ENCODE measurements at regions of chr19 and their contacts with region 1.

Region 1: DNA sequence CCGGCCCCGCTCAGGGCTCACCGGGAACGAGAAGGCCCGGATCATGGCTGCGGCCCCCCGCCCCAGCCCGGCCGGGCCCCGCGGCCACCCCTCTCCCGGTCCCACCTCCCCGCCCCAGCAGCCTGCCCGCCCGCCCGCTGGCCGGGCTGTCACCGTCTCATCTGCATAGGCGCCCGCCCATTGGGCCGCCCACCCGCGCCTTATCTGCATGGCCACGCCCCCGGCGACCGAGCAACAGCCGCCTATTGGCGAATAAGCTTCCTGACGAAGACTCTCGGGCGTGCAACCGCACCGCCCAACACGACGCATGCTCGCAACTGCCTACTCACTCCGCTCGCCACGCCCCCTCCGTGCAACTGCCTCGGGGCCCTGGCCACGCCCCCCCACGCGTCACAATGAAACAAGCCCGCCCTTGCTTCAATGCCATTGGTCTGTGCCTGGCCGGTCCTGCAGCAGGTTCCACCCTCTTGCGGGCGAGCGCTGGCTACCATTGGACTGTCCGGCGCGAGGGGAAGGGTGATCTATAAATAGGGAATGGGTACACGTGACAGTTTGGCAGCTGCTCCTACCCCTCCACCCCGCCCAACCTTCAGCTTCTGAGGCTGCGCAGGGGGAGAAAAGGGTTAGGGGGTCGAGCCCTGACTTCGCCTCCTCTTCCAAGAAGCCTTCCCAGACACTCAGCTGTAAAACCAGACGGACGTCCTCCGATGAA is at the start of gene DACT3:
- DNase-seq: peak; percentile 100
- H3K4me3 Mint-ChIP-seq: peak within 1 kb of the TSS; percentile 63
- H3K27ac Mint-ChIP-seq: peak within 1 kb of the TSS; percentile 39
- H3K4me1 Mint-ChIP-seq: peaks cover 7% of the 10 kb centered on the region
- H3K27me3 Mint-ChIP-seq: peaks cover 41% of the 10 kb centered on the region
- CTCF ChIP-seq: no peak
- total RNA-seq, gene DACT3: 0.09 TPM in 1 of 2 replicates, not detected in the other

Region 2: DNA sequence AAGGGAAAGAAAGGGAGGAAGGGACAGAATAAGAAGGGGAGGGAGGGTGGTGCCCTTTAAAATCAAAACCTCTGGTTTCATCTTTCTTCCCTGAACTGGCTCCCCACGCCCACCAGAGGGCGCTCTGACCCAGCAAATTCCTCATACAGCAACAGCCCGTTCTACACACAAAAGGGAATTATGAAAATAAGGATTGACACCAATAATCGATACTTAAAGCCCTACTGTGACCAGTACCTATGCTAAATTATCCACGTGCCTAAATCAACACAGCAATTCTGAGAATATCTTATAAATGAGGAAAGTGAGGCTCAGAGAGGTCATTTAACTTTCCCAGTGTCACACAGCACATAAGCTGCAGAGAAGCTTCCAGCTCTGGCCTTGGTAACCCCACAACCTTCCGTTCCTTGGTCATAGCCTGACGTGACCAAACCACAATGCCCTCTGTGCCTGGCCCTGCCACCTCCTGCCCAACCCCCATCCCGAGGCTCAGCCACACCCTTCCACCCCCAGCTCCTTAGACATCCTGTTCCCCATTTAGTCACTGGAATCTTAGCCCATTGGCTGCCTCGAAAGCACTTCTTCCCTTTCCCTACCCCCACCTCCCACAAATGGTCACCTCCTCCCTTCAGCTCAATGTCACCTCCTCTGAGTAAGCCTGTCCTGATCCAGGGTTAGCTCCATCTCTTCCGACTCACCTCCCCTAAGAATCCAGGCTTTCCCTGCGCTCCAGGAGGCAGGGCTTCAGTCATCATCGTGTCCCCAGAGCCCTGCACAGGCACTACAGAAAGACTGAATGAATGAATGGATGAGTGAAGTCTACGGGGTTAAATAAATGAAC is 131.3 kb before region 1 on chr19:
- CTCF ChIA-PET with region 1: interaction called, 25 read pairs
- POLR2A ChIA-PET with region 1: interaction called, 4 read pairs
- intact Hi-C with region 1: loop called (anchors 1 kb)
- DNase-seq: peak; percentile 75
- H3K4me3 Mint-ChIP-seq: peak overlapping the region; percentile 39
- H3K27ac Mint-ChIP-seq: no peak overlapping the region
- H3K4me1 Mint-ChIP-seq: peaks cover 15% of the 10 kb centered on the region
- H3K27me3 Mint-ChIP-seq: no peaks in the 10 kb centered on the region
- CTCF ChIP-seq: peak; percentile 94

Region 3: DNA sequence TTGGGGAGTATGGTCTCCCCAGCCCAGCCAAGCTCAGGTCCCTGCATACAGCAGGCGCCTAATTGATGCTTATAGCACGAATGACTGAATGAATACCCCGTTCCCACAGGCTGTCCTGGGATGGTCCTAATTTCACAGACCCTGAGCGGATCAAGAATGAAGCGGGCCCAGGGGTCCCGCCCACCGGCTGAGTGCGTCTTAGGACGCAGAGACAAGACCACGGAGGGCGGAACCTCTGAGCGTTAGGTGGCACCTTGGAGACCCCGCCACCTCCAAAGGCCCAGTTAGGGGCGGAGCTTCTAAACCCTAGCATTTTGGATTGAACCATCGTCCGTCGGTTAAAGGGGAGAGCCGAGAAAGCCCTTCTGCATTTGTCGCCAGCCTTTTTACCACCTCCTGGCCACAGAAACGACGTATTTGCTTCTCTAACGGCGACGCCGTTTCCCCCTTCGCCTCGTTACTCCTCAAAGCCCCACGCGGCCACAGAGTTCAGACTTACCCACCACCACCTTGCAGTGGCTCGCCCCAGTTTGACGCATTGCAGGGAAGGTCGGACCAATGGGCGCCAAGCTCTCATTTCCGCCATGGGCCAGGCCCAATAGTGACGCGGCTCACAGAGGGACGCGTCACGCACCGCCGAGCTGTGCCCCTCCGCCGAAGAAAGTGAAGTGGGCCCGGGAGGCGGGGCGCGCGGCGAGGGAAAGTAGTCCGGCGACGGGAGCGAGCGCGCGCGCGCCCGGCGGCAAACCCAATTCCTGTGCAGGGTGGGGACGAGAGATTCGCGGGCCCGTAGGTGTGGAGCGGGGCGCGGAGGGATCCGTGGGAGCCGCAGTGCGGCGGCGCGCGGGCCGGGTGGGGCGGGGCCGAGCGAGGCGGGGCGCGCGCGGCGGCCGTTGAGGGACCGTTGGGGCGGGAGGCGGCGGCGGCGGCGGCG is 60.5 kb before region 1 on chr19:
- CTCF ChIA-PET with region 1: interaction called, 14 read pairs
- POLR2A ChIA-PET with region 1: interaction called, 30 read pairs
- intact Hi-C with region 1: no loop called
- DNase-seq: peak; percentile 98
- H3K4me3 Mint-ChIP-seq: peak overlapping the region; percentile 96
- H3K27ac Mint-ChIP-seq: peak overlapping the region; percentile 100
- H3K4me1 Mint-ChIP-seq: peaks cover 4% of the 10 kb centered on the region
- H3K27me3 Mint-ChIP-seq: no peaks in the 10 kb centered on the region
- CTCF ChIP-seq: no peak

Region 4: DNA sequence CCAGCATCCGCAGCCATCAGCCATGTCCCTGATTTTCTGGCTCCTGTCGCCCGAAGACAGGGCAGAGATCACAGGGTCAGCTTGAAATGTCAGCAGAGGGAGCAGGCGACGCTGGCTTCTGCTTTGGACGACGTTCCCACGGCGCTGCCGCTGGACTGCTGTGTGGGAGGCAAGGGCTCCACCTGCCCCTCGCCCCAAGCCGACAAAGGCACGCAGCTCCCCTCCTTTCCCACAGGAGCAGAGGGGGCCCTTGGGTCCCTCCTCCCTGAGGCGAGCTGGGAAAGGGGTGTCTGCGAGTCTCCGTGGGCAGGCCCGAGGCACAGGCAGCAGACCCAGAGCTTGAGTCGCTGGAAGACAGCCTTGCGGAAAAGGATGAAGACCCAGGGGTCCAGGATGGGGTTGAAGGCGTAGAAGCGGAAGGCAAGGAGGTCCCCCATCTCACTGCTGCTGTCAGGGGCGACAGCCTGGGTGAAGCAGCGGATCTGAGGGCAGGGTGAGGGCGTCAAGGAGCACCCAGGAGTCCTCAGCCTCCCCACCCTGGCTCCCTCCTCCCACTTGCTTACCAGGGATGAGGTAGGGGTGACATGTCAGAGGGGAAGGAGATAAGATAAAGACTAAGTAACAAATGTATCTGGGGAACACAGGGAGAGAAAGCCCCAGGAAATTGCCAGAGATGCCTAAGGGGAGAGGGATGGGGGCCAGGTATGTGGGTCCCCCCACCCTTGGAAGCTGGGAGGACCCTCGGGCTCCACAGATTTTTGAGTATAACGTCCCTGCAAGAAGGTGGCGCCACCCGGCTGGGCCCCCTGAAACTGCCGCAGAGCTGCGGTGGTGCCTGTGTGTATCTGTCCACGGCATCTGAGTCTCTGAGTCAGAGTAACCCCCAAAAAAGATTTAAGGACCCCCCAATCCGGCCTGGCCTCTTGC is 39.7 kb before region 1 on chr19:
- CTCF ChIA-PET with region 1: interaction called, 101 read pairs
- POLR2A ChIA-PET with region 1: interaction called, 20 read pairs
- intact Hi-C with region 1: no loop called
- DNase-seq: no peak
- H3K4me3 Mint-ChIP-seq: no peak overlapping the region
- H3K27ac Mint-ChIP-seq: no peak overlapping the region
- H3K4me1 Mint-ChIP-seq: peaks cover 21% of the 10 kb centered on the region
- H3K27me3 Mint-ChIP-seq: no peaks in the 10 kb centered on the region
- CTCF ChIP-seq: no peak

Region 5: GRCh38 chr19:46717034-46717723 is 56.0 kb after region 1 on chr19 and contains the start of gene PRKD2:
- CTCF ChIA-PET with region 1: interaction called, 14 read pairs
- POLR2A ChIA-PET with region 1: no interaction called
- intact Hi-C with region 1: no loop called
- DNase-seq: peak; percentile 76
- H3K4me3 Mint-ChIP-seq: peak within 1 kb of the TSS; percentile 97
- H3K27ac Mint-ChIP-seq: peak within 1 kb of the TSS; percentile 99
- H3K4me1 Mint-ChIP-seq: no peaks in the 10 kb centered on the region
- H3K27me3 Mint-ChIP-seq: no peaks in the 10 kb centered on the region
- CTCF ChIP-seq: no peak
- total RNA-seq, gene PRKD2: 30.4 and 35.9 TPM in 2 replicates